GM18951 (cell line): ENCODE measurements at regions of chr5 and their contacts with region 1.

Region 1: GRCh38 chr5:107571621-107572536 is 98.9 kb downstream of the EFNA5 start:
- POLR2A ChIP-seq: no peak

Region 2: GRCh38 chr5:107395632-107396350 is 176.1 kb before region 1 on chr5:
- in situ Hi-C with region 1: loop called (anchors 10 kb)
- POLR2A ChIP-seq: no peak

Region 3: DNA sequence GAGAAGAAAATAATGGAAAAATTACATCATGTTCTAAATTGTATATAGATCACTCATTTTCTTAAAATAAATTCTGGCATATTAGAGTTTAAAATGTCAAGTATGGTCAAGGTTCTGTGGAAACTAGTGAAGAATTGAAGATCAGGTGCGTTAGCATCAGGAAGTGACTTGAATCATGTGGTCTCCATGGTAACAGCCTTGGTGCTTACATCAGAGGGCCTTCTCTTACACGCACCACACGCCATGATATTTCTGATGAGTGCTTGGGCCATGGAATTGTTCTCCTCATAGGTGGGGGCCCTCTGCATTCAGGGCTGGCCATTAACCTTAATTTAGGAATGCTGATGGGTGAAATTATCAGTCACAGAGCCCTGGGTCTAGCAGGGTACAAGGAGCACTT is 387.0 kb after region 1 on chr5:
- in situ Hi-C with region 1: no loop called
- POLR2A ChIP-seq: no peak